Mammary epithelial cell (primary cell): ENCODE measurements at regions of chr10 and their contacts with region 1.

Region 1: DNA sequence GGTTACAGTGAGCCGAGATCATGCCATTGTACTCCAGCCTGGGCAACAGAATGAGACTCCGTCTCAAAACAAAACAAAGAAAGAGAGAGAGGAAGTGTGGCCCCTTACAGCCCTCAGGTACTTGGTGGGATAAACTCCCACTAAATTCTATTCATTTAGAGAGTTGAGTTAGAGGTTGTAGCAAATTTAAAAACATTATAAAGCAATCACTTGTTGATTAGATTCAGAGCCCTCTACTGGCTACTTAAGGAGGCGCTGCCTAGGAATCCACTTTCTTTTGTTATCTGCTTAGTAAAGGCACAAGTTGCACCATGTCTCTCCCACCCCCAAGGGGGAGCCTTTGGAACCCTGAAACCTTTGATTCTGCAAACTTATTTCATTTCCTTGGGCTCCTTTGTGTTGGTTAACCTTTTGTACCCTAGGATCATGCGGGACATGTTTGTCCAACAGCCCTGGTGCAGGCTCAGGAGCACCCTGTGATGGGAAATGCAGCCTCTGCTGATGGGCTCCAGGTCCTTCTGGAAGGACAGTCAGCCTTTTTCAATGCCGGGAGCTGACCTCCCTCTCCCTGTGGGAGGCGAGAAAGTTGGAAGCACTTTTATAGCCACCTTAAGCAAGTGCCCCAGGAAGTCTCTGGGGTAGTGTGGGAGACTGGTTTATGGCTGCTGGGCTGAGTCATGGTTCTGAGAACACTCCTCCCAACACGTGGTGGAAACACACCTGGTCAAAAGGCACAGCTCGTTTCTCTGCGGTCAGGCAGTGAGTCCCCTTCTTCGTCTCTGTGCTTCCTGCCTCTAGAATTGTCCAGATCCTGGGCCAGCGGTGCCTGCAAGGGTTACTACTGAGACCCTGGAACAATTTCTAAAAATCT is 2.3 kb downstream of the HKDC1 start:
- DNase-seq: peak; percentile 96
- H3K4me3 ChIP-seq: peak overlapping the region in 2 of 3 experiments; percentile 13 to 22
- H3K27ac ChIP-seq: peak overlapping the region; percentile 79
- H3K4me1 ChIP-seq: peaks cover 44% of the 10 kb centered on the region
- H3K27me3 ChIP-seq: no peaks in the 10 kb centered on the region
- CTCF ChIP-seq: peak; percentile 72 to 80

Region 2: GRCh38 chr10:68879627-68880026 is 342.8 kb before region 1 on chr10:
- CTCF ChIA-PET with region 1: no interaction called
- dilution Hi-C with region 1: no loop called
- in situ Hi-C with region 1: no loop called
- intact Hi-C with region 1: no loop called
- DNase-seq: no peak
- H3K4me3 ChIP-seq: no peak overlapping the region
- H3K27ac ChIP-seq: no peak overlapping the region
- H3K4me1 ChIP-seq: no peaks in the 10 kb centered on the region
- H3K27me3 ChIP-seq: peaks cover 2% of the 10 kb centered on the region
- CTCF ChIP-seq: no peak

Region 3: GRCh38 chr10:68955832-68956532 is 266.4 kb before region 1 on chr10 and contains the start of gene DDX21:
- CTCF ChIA-PET with region 1: no interaction called
- dilution Hi-C with region 1: no loop called
- in situ Hi-C with region 1: no loop called
- intact Hi-C with region 1: loop called (anchors 5 kb)
- DNase-seq: peak; percentile 90
- H3K4me3 ChIP-seq: peak within 1 kb of the TSS; percentile 67 to 82 (median 74)
- H3K27ac ChIP-seq: peak within 1 kb of the TSS; percentile 91
- H3K4me1 ChIP-seq: peaks cover 10% of the 10 kb centered on the region
- H3K27me3 ChIP-seq: no peaks in the 10 kb centered on the region
- CTCF ChIP-seq: peak; percentile 63 to 67
- total RNA-seq, gene DDX21: 92.9 to 142 TPM

Region 4: GRCh38 chr10:68988530-68989316 is 233.7 kb before region 1 on chr10 and contains the start of gene KIFBP:
- CTCF ChIA-PET with region 1: no interaction called
- dilution Hi-C with region 1: no loop called
- in situ Hi-C with region 1: no loop called
- intact Hi-C with region 1: loop called (anchors 1 kb)
- DNase-seq: peak; percentile 96
- H3K4me3 ChIP-seq: peak within 1 kb of the TSS; percentile 70 to 83 (median 79)
- H3K27ac ChIP-seq: peak within 1 kb of the TSS; percentile 73
- H3K4me1 ChIP-seq: peaks cover 28% of the 10 kb centered on the region
- H3K27me3 ChIP-seq: no peaks in the 10 kb centered on the region
- CTCF ChIP-seq: peak; percentile 16 to 64
- total RNA-seq, gene KIFBP: 36.0 to 39.3 TPM

Region 5: DNA sequence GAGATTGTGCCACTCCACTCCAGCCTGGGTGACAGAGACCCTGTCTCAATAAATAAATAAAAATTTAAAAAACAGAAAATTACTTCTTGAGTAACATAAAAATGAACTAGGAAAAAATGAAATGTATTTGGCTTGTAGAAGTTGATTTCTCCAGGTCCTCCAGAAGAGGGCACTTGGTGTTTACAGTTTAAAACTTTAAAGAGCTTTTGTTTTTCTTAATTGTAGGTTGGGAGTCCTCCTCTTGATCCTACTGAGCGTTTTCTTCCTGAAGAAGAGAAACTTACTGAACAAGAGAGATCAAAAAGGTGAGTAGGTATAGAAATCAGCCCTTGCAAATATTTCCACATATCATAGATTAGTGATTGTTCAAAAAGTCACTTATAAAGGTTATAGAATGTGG is 217.6 kb before region 1 on chr10:
- CTCF ChIA-PET with region 1: no interaction called
- dilution Hi-C with region 1: no loop called
- in situ Hi-C with region 1: no loop called
- intact Hi-C with region 1: loop called (anchors 1 kb)
- DNase-seq: no peak
- H3K4me3 ChIP-seq: no peak overlapping the region
- H3K27ac ChIP-seq: no peak overlapping the region
- H3K4me1 ChIP-seq: no peaks in the 10 kb centered on the region
- H3K27me3 ChIP-seq: no peaks in the 10 kb centered on the region
- CTCF ChIP-seq: peak; percentile 32 to 47

Region 6: DNA sequence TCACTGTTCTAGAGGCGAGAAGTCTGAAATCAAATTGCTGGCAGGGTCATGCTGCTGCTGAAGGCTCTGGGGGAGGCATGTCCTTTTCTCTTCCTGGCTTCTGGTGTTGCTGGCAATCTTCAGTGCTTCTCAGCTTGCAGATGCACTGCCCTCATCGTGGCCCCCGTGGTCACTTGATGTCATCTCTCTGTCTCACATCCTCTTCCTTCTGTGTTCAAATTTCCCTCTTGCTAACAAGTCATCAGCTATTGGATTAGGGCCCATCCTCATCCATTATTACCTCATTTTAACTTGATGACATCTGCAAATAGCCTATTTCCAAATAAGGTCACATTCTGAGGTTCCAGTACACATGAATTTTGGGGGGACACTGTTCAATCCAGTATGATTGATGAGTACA is 171.1 kb before region 1 on chr10:
- CTCF ChIA-PET with region 1: no interaction called
- dilution Hi-C with region 1: no loop called
- in situ Hi-C with region 1: no loop called
- intact Hi-C with region 1: no loop called
- DNase-seq: no peak
- H3K4me3 ChIP-seq: no peak overlapping the region
- H3K27ac ChIP-seq: no peak overlapping the region
- H3K4me1 ChIP-seq: peaks cover 5% of the 10 kb centered on the region
- H3K27me3 ChIP-seq: no peaks in the 10 kb centered on the region
- CTCF ChIP-seq: no peak

Region 7: DNA sequence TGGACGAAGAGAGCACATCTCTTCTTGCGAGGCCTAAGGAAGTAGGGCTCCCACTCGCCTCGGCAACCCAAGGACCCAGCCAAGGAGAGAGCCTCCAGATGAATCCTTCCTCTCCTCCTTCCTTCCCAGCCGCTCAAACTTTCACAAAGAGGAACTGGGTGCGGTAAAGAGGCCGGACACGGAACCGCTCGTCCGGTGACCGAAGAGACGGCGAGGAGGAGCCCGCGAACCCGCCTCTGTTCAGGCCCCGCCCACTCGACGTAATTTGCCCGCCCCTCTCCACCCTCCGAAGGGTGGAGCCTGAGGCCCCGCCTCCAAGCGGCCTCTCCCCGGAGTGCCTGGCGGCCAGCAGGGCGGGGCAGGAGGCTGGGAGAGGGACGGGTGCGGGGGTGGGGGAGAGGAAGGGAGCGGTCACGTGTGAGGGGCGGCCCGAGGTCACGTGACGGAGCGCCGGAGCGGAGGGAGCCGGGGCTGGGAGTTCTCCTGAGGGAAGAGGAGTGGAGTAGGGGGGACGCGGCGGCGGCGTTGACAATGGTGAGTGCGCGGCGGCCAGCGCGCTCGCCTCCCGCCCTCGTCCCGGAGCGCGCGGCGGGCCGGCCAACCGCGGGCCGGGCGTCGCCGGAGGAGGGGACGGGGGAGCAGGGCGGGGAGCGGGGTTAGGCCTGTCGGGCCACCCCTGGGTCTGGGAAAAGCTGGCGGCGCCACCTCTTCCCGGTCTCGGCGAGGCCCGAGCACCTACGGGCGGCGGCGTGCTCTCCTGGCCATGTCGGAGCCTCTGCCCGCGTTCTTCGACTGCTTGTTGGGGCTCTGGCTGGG is 98.4 kb before region 1 on chr10 and contains the start of gene VPS26A:
- CTCF ChIA-PET with region 1: no interaction called
- dilution Hi-C with region 1: no loop called
- in situ Hi-C with region 1: no loop called
- intact Hi-C with region 1: loop called (anchors 1 kb)
- DNase-seq: peak; percentile 99
- H3K4me3 ChIP-seq: peak within 1 kb of the TSS; percentile 81 to 96 (median 83)
- H3K27ac ChIP-seq: peak within 1 kb of the TSS; percentile 96
- H3K4me1 ChIP-seq: peaks cover 4% of the 10 kb centered on the region
- H3K27me3 ChIP-seq: no peaks in the 10 kb centered on the region
- CTCF ChIP-seq: no peak
- total RNA-seq, gene VPS26A: 30.3 to 75.8 TPM

Region 8: GRCh38 chr10:69179743-69180524 is 42.5 kb before region 1 on chr10 and contains the start of gene SUPV3L1:
- CTCF ChIA-PET with region 1: interaction called, 11 read pairs
- dilution Hi-C with region 1: no loop called
- in situ Hi-C with region 1: no loop called
- intact Hi-C with region 1: loop called (anchors 1 kb)
- DNase-seq: peak; percentile 91
- H3K4me3 ChIP-seq: peak within 1 kb of the TSS; percentile 75 to 98 (median 88)
- H3K27ac ChIP-seq: peak within 1 kb of the TSS; percentile 99
- H3K4me1 ChIP-seq: peaks cover 7% of the 10 kb centered on the region
- H3K27me3 ChIP-seq: no peaks in the 10 kb centered on the region
- CTCF ChIP-seq: no peak
- total RNA-seq, gene SUPV3L1: 26.8 to 36.7 TPM